H1 (cell line): ENCODE measurements at regions of chr1 and their contacts with region 1.

Region 1: DNA sequence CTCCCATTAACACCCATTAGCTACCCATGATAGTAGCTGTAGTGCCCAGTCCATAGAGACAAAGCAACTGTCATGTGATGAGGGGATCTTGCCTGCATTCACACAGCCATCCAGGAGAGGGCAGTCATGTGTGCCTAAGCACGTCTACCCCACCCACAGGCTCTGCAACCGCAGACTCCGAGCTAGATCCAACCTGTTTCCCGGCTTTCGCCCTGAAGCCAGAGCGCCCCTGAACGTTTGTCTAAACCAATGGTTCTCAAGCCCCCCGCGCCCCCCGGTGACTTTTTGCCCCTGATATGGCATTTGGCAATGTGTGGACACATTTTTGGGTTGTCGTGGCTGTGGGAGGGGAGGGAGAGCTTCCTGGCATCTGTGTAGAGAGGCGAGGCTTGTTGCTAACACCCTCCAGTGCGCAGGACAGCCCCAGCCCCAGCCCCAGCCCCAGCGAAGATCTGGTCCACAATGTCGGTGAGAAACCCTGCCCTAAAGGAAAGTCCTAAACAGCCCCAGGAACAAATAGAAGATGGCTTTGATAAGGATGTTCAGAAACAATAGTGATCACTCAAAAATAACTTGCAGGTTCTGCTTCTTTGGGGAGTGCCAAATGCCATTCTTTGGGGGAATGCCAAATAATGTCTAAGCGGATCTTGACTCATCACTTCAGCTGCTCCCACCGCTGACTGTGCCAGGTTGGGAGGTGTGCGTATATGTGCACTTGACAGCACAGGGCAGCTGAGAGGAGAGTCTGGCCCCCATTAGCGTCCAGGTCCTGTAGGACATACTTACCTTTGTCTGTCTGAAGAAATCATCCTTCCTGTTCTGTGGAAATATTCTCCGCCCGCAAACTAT is 34.5 kb downstream of the SLC44A3 start:
- DNase-seq: peak; percentile 61 to 78
- H3K4me3 ChIP-seq: peak overlapping the region in 3 of 4 experiments; percentile 16 to 52 (median 25); a peak in 4 of 8 replicates
- H3K27ac ChIP-seq: no peak overlapping the region
- H3K4me1 ChIP-seq: peaks cover 0 to 6% (median under 1%) of the 10 kb centered on the region in 4 experiments; a peak in 3 of 7 replicates
- H3K27me3 ChIP-seq: peaks cover 0 to 5% (median 2%) of the 10 kb centered on the region in 4 experiments; a peak in 3 of 7 replicates
- CTCF ChIP-seq: peak; percentile 93 to 100 (median 95)
- EP300 ChIP-seq: peak in 1 of 2 experiments; percentile 5; a peak in 1 of 3 replicates
- POLR2A ChIP-seq: no peak
- RAD21 ChIP-seq: peak; percentile 93 to 97

Region 2: GRCh38 chr1:94590203-94591137 is 264.2 kb before region 1 on chr1:
- CTCF ChIA-PET with region 1: no interaction called
- POLR2A ChIA-PET with region 1: no interaction called
- DNase-seq: peak in 1 of 2 experiments; percentile 16
- H3K4me3 ChIP-seq: no peak overlapping the region
- H3K27ac ChIP-seq: no peak overlapping the region
- H3K4me1 ChIP-seq: no peaks in the 10 kb centered on the region; a peak in 1 of 7 replicates
- H3K27me3 ChIP-seq: no peaks in the 10 kb centered on the region
- CTCF ChIP-seq: no peak
- EP300 ChIP-seq: no peak
- POLR2A ChIP-seq: no peak
- RAD21 ChIP-seq: no peak

Region 3: GRCh38 chr1:94840811-94841210 is 13.9 kb before region 1 on chr1:
- CTCF ChIA-PET with region 1: interaction called, 14 read pairs
- POLR2A ChIA-PET with region 1: interaction called, 4 read pairs
- DNase-seq: no peak
- H3K4me3 ChIP-seq: no peak overlapping the region
- H3K27ac ChIP-seq: no peak overlapping the region
- H3K4me1 ChIP-seq: no peaks in the 10 kb centered on the region
- H3K27me3 ChIP-seq: no peaks in the 10 kb centered on the region
- CTCF ChIP-seq: no peak
- EP300 ChIP-seq: no peak
- POLR2A ChIP-seq: no peak
- RAD21 ChIP-seq: no peak

Region 4: DNA sequence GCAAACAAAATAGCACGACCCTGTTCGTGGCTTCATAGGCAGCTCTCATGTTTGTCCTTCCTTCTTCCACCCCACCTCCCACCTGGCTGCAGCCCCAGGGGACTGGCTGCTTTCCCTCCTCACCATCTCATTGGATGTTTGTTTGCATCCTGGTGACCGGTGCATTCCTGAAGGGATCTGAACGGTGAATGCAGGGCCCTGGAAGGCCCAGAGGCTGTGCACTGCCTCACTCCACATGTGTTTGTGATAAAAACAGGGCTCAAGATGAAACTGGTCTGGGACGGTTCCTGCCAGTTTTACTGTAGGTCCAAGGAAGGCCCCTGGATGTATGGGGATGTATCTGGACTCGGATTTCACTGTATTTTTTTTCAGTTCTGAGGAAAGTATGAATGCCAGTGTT is 29.4 kb after region 1 on chr1:
- CTCF ChIA-PET with region 1: interaction called, 27 read pairs
- POLR2A ChIA-PET with region 1: interaction called, 5 read pairs
- DNase-seq: peak; percentile 43 to 52
- H3K4me3 ChIP-seq: no peak overlapping the region; a peak in 1 of 8 replicates
- H3K27ac ChIP-seq: no peak overlapping the region
- H3K4me1 ChIP-seq: peaks cover 7 to 38% (median 21%) of the 10 kb centered on the region in 4 experiments
- H3K27me3 ChIP-seq: peaks cover 0 to 1% (median 0%) of the 10 kb centered on the region in 4 experiments; a peak in 1 of 7 replicates
- CTCF ChIP-seq: no peak
- EP300 ChIP-seq: no peak
- POLR2A ChIP-seq: peak in 1 of 2 experiments; percentile 26; a peak in 1 of 3 replicates
- RAD21 ChIP-seq: no peak

Region 5: GRCh38 chr1:94903280-94904009 is 48.8 kb after region 1 on chr1:
- CTCF ChIA-PET with region 1: interaction called, 19 read pairs
- POLR2A ChIA-PET with region 1: no interaction called
- DNase-seq: no peak
- H3K4me3 ChIP-seq: no peak overlapping the region
- H3K27ac ChIP-seq: no peak overlapping the region
- H3K4me1 ChIP-seq: peaks cover 0 to 4% (median 0%) of the 10 kb centered on the region in 4 experiments; a peak in 3 of 7 replicates
- H3K27me3 ChIP-seq: no peaks in the 10 kb centered on the region
- CTCF ChIP-seq: no peak
- EP300 ChIP-seq: no peak
- POLR2A ChIP-seq: no peak
- RAD21 ChIP-seq: no peak

Region 6: DNA sequence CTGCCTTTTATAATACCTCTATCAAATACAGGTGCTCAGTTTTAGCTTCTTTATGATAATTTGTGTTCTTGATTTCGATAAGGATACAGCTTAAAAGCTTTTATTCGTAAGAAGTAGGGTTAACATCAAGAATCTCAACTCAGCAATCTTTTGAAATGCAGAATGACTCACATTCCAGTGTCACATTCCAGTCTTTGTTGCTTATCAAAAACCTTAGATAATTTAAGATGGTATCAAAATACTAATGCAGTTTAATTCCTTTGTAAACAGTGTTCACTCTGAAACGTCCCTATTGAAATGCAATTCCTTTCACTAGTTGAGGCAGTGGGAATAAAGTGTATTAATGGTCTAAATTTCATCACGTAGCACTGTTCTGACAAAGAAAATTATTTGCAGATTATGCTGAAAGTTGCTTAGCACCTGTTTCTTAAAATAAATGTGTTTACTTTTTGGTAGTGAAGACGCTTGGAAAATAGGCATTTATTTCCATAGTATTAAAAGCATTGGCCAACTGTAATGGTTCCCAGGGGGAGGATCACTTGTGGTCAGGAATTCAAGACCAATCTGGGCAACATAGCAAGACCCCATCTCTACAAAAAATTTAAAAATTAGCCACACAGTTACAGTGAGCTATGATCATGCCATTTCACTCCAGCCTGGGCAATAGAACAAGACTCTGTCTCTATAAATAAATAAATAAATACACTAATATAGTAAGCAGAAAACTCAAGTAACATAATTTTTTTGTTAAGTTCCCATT is 82.4 kb after region 1 on chr1:
- CTCF ChIA-PET with region 1: interaction called, 20 read pairs
- POLR2A ChIA-PET with region 1: no interaction called
- DNase-seq: no peak
- H3K4me3 ChIP-seq: 0 out of 8 replicates have a peak overlapping the region, but pooled peaks of 1 of the 4 experiments have one; percentile 0
- H3K27ac ChIP-seq: no peak overlapping the region
- H3K4me1 ChIP-seq: peaks cover 2 to 20% (median 10%) of the 10 kb centered on the region in 4 experiments; a peak in 4 of 7 replicates
- H3K27me3 ChIP-seq: no peaks in the 10 kb centered on the region
- CTCF ChIP-seq: no peak
- EP300 ChIP-seq: 0 out of 3 replicates have a peak, but pooled peaks of 1 of the 2 experiments have one; percentile 13
- POLR2A ChIP-seq: no peak
- RAD21 ChIP-seq: no peak

Region 7: DNA sequence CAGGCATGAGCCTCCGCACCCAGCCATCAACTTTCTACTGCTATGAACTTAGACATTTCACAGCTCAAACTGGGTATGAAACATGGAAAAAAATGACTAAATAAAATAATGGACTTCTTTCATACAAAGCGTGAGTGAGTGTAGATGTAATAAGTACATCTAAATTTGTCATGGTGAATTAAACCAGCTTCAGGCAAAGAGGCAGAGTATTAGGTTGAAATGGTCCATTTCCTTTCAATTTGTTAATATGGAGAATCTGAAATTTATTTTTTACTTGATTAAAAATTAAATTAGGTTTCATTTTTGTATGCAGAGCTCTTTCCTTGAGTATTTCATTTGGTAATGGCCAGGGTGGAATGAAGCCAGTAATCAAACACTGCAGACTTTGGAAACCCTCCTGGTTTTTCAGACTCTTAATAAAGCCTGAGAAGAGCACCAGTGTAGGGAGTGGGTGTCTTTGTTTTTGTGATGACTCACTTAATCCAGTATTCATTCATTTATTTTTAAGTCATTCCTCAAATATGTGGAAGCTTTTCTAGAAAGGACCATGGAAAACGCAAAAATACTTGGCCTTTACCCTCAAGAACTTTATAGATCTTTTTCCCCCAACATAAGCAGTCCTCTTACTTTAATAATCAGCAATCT is 168.8 kb after region 1 on chr1:
- CTCF ChIA-PET with region 1: interaction called, 11 read pairs
- POLR2A ChIA-PET with region 1: no interaction called
- DNase-seq: no peak
- H3K4me3 ChIP-seq: no peak overlapping the region
- H3K27ac ChIP-seq: no peak overlapping the region
- H3K4me1 ChIP-seq: peaks cover 0 to 3% (median 1%) of the 10 kb centered on the region in 4 experiments; a peak in 1 of 7 replicates
- H3K27me3 ChIP-seq: no peaks in the 10 kb centered on the region
- CTCF ChIP-seq: no peak
- EP300 ChIP-seq: no peak
- POLR2A ChIP-seq: no peak
- RAD21 ChIP-seq: no peak

Region 8: GRCh38 chr1:95043141-95043980 is 188.7 kb after region 1 on chr1:
- CTCF ChIA-PET with region 1: interaction called, 55 read pairs
- POLR2A ChIA-PET with region 1: interaction called, 3 read pairs
- DNase-seq: peak; percentile 69 to 88
- H3K4me3 ChIP-seq: peak overlapping the region in 1 of 4 experiments; percentile 35; a peak in 3 of 8 replicates
- H3K27ac ChIP-seq: no peak overlapping the region
- H3K4me1 ChIP-seq: peaks cover 0 to 3% (median 0%) of the 10 kb centered on the region in 4 experiments; a peak in 1 of 7 replicates
- H3K27me3 ChIP-seq: no peaks in the 10 kb centered on the region
- CTCF ChIP-seq: peak; percentile 92 to 100 (median 99)
- EP300 ChIP-seq: no peak
- POLR2A ChIP-seq: no peak
- RAD21 ChIP-seq: peak; percentile 99 to 100

Region 9: GRCh38 chr1:95126846-95127245 is 272.2 kb after region 1 on chr1:
- CTCF ChIA-PET with region 1: no interaction called
- POLR2A ChIA-PET with region 1: no interaction called
- DNase-seq: no peak
- H3K4me3 ChIP-seq: no peak overlapping the region
- H3K27ac ChIP-seq: no peak overlapping the region
- H3K4me1 ChIP-seq: no peaks in the 10 kb centered on the region
- H3K27me3 ChIP-seq: no peaks in the 10 kb centered on the region
- CTCF ChIP-seq: no peak
- EP300 ChIP-seq: no peak
- POLR2A ChIP-seq: no peak
- RAD21 ChIP-seq: no peak